Caco-2 (cell line): ENCODE measurements at regions of chr12 and their contacts with region 1.

Region 1: DNA sequence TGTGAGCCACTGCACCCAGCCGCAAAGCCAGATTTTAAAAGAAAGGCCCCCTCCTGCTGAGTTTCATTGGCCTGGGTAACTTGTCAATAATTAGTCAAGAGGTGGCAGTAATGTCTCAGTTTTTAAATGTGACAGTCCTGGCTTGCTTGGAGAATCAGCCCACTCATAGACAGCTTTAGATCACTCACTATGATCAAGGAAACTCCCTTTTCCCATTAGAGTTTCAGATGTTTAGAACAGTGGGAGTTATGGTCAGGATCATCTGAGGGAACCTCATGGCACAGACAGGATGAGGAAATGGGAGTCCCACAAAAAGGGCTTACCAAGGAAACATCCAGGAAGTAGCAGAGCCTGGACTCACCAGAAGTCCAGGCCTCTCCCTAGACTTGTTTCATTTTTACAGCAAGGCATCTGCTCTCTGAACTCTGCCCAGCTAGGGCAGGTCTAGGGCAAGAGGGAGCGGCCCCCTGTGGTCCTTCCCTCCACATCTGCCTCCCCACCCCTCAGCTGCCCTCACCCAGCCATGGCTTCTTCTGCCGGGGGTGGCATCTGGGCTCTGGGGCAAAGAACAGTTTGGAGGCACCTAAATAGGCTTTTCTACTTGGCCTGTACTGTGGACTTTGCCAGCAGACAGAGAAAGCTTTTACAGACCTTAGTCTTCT is 11.2 kb downstream of the BCL2L14 start:
- DNase-seq: peak; percentile 62 to 67
- H3K4me3 ChIP-seq: no peak overlapping the region
- H3K4me3 Mint-ChIP-seq: no peak overlapping the region
- H3K27ac Mint-ChIP-seq: peak overlapping the region; percentile 29
- H3K4me1 ChIP-seq: peaks cover 10% of the 10 kb centered on the region; the same call in 1 of the 2 replicates
- H3K4me1 Mint-ChIP-seq: peaks cover 15% of the 10 kb centered on the region
- H3K27me3 ChIP-seq: no peaks in the 10 kb centered on the region
- H3K27me3 Mint-ChIP-seq: no peaks in the 10 kb centered on the region
- CTCF ChIP-seq: peak; percentile 37 to 42

Region 2: DNA sequence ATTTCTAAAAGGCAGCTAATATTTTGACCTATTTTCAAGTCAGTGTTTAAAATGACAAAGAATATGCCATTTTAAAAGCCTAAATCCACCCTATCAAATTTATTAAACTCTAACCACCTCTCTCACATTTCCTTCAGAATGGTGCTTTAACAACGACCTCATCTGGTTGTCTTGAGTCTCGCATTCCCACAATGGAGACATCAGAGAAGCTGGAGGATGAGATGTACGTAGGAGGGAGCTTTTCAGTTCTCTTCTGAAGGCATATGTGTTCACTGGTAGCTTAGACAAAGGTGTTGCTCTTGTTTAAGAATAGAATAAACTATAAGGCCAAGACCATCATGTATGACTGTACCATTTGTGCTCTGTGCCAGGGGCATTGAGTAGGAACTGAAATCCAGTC is 71.6 kb after region 1 on chr12:
- CTCF ChIA-PET with region 1: no interaction called
- POLR2A ChIA-PET with region 1: no interaction called
- intact Hi-C with region 1: no loop called
- DNase-seq: no peak
- H3K4me3 ChIP-seq: no peak overlapping the region
- H3K4me3 Mint-ChIP-seq: no peak overlapping the region
- H3K27ac Mint-ChIP-seq: no peak overlapping the region
- H3K4me1 ChIP-seq: no peaks in the 10 kb centered on the region
- H3K4me1 Mint-ChIP-seq: no peaks in the 10 kb centered on the region
- H3K27me3 ChIP-seq: no peaks in the 10 kb centered on the region
- H3K27me3 Mint-ChIP-seq: no peaks in the 10 kb centered on the region
- CTCF ChIP-seq: no peak

Region 3: GRCh38 chr12:12327802-12328201 is 245.8 kb after region 1 on chr12:
- CTCF ChIA-PET with region 1: interaction called, 21 read pairs
- POLR2A ChIA-PET with region 1: no interaction called
- intact Hi-C with region 1: loop called (anchors 1 kb)
- DNase-seq: peak in 1 of 2 experiments; percentile 69
- H3K4me3 ChIP-seq: no peak overlapping the region
- H3K4me3 Mint-ChIP-seq: no peak overlapping the region
- H3K27ac Mint-ChIP-seq: no peak overlapping the region
- H3K4me1 ChIP-seq: peaks cover 17% of the 10 kb centered on the region
- H3K4me1 Mint-ChIP-seq: peaks cover 23% of the 10 kb centered on the region
- H3K27me3 ChIP-seq: no peaks in the 10 kb centered on the region
- H3K27me3 Mint-ChIP-seq: no peaks in the 10 kb centered on the region
- CTCF ChIP-seq: peak; percentile 83 to 84

Region 4: DNA sequence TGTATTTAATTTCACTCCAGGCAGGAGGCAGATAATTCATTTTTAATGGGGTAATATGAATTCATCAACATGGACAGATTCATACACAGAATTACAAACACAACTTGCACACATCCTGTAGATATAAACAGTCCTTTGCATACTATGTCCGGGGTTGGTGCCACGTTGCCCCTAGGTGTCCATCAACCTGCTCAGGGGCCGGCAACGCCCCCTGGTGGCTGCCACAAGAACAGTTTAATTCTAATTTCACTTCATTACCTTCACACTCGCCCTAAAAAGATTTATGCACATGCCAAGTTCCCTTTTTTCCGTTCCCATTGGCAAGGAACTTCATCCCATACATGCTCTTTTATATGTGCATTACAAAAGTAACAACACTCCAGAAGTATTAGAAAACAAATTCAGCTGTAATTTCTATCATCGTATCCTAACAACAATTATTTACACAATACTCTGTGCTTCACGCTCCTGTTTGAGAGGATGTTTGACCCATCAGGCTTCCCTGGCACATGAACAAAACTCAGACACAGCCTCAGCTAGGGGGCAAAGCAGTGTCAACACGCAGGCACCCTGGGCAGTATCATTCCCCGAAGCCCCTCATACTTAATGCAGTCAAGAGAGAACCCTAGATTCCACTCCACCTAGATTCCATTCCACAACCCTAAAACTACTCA is 252.5 kb after region 1 on chr12:
- CTCF ChIA-PET with region 1: interaction called, 21 read pairs
- POLR2A ChIA-PET with region 1: no interaction called
- intact Hi-C with region 1: loop called (anchors 1 kb)
- DNase-seq: peak; percentile 75 to 83
- H3K4me3 ChIP-seq: no peak overlapping the region
- H3K4me3 Mint-ChIP-seq: no peak overlapping the region
- H3K27ac Mint-ChIP-seq: peak overlapping the region; percentile 34
- H3K4me1 ChIP-seq: peaks cover 16% of the 10 kb centered on the region
- H3K4me1 Mint-ChIP-seq: peaks cover 31% of the 10 kb centered on the region
- H3K27me3 ChIP-seq: no peaks in the 10 kb centered on the region
- H3K27me3 Mint-ChIP-seq: no peaks in the 10 kb centered on the region
- CTCF ChIP-seq: peak; percentile 89 to 99

Region 5: DNA sequence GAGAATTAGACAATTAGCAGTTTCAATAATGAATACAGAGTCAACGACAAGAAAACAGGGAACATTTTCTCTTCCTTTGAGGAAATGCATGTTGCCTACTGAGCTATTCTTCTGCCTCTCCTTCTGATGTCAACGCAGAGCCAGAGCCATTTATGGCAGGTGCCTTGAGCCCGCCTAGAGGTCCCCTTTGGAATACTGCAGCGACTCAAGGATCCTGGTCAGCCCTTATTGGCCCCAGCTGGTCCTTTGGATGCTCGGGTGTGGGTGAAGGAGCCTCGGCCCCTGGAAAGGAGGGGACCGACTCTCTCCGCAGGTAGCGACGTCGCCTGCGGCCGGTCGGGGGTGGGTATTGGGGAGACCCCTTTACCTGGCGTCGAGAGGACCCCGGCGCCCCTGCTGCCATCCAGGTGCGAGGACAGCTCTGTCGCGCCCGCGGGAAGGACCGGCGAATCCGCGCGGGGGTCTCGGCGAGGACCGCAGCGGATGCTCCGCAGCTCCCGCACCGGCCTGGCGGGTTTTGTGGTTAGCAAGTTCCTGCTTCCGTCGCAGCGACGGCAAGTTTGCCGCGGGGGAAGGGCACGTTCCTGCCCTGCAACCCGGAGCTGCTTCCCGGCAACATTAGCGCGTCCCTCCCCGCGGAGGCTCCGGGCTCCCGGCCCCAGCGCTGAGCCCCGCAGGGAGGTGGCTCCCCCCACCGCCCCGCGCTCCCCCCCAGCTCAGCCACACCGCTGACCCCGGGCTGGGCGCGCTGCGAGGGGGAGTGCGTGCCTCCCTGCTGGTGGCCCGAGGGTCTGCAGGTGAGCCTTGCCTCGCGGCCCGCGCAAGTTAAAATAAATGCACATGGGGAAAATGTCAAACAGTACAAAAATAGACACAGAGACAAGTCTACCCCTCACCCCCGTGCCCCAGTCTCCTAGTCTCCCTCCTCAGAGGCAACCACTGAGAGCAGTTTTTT is 268.0 kb after region 1 on chr12 and contains the start of gene MANSC1:
- CTCF ChIA-PET with region 1: interaction called, 12 read pairs
- POLR2A ChIA-PET with region 1: no interaction called
- intact Hi-C with region 1: no loop called
- DNase-seq: peak; percentile 83 to 84
- H3K4me3 ChIP-seq: peak within 1 kb of the TSS; percentile 86
- H3K4me3 Mint-ChIP-seq: peak within 1 kb of the TSS; percentile 83
- H3K27ac Mint-ChIP-seq: peak within 1 kb of the TSS; percentile 85
- H3K4me1 ChIP-seq: peaks cover 13% of the 10 kb centered on the region
- H3K4me1 Mint-ChIP-seq: peaks cover 15% of the 10 kb centered on the region
- H3K27me3 ChIP-seq: no peaks in the 10 kb centered on the region
- H3K27me3 Mint-ChIP-seq: no peaks in the 10 kb centered on the region
- CTCF ChIP-seq: peak; percentile 69 to 89
- total RNA-seq, gene MANSC1: 27.5 and 28.9 TPM in 2 replicates

Region 6: GRCh38 chr12:12654691-12655460 is 572.9 kb after region 1 on chr12:
- CTCF ChIA-PET with region 1: no interaction called
- POLR2A ChIA-PET with region 1: no interaction called
- intact Hi-C with region 1: loop called (anchors 5 kb)
- DNase-seq: no peak
- H3K4me3 ChIP-seq: no peak overlapping the region
- H3K4me3 Mint-ChIP-seq: no peak overlapping the region
- H3K27ac Mint-ChIP-seq: no peak overlapping the region
- H3K4me1 ChIP-seq: no peaks in the 10 kb centered on the region
- H3K4me1 Mint-ChIP-seq: no peaks in the 10 kb centered on the region
- H3K27me3 ChIP-seq: no peaks in the 10 kb centered on the region
- H3K27me3 Mint-ChIP-seq: no peaks in the 10 kb centered on the region
- CTCF ChIP-seq: no peak